Mammary epithelial cell (primary cell): ENCODE measurements at regions of chr15 and their contacts with region 1.

Region 1: GRCh38 chr15:33278816-33279612 is 31.8 kb upstream of the RYR3 start:
- DNase-seq: peak; percentile 96
- H3K4me3 ChIP-seq: no peak overlapping the region
- H3K27ac ChIP-seq: peak overlapping the region; percentile 96
- H3K4me1 ChIP-seq: peaks cover 22% of the 10 kb centered on the region
- H3K27me3 ChIP-seq: no peaks in the 10 kb centered on the region
- CTCF ChIP-seq: peak in 1 of 2 donors; percentile 37

Region 2: DNA sequence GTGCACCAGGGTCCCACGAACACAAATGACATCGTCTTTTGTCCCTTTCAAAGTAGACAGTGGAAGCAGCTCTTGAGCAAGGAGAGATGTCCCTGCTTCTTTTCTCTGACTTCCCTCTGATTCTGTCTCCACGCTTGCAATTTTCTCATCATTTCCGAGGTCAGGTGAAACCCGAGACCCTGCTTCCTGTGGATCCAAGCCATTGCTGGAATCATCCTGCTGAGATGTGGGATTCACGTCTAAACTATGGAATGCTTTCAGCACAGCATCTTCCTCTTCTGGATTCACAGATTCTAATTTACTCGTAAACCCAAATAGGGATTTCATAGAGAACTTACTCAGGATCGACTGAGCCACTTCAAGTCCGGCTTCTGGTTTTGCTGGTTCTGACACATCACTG is 211.6 kb before region 1 on chr15:
- CTCF ChIA-PET with region 1: no interaction called
- dilution Hi-C with region 1: no loop called
- in situ Hi-C with region 1: no loop called
- intact Hi-C with region 1: no loop called
- DNase-seq: no peak
- H3K4me3 ChIP-seq: peak overlapping the region in 2 of 3 experiments; percentile 8 to 23
- H3K27ac ChIP-seq: peak overlapping the region; percentile 84
- H3K4me1 ChIP-seq: peaks cover 33% of the 10 kb centered on the region
- H3K27me3 ChIP-seq: no peaks in the 10 kb centered on the region
- CTCF ChIP-seq: no peak

Region 3: DNA sequence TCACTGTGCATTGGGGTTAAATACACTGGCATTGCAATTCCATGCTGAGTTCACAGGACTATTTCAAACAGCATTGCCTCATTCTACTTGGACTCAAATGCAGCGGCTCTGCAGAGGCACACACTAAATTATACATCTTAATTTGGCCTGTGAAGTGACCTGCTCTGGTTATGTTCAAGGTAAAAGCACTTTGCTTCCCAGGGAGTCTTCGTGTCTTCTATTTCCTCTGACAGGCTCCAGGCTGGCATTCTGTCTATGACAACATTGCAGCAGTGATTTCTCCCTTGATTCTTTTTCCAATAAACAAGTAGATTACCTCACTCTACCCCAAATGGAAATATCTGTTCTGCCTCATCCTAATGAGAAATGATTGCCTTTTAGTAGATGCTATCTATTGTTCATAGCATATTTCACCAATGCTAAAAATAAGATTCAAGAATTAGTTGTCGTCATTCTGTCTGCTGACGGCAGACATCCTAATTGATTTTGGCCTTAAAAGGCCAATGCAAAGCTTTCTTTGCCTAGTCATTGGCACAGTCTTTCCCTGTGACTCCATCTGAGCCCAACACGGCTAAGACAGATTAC is 118.3 kb before region 1 on chr15:
- CTCF ChIA-PET with region 1: no interaction called
- dilution Hi-C with region 1: no loop called
- in situ Hi-C with region 1: no loop called
- intact Hi-C with region 1: no loop called
- DNase-seq: no peak
- H3K4me3 ChIP-seq: no peak overlapping the region
- H3K27ac ChIP-seq: no peak overlapping the region
- H3K4me1 ChIP-seq: peaks cover 6% of the 10 kb centered on the region
- H3K27me3 ChIP-seq: no peaks in the 10 kb centered on the region
- CTCF ChIP-seq: no peak

Region 4: GRCh38 chr15:33194704-33195670 is 84.0 kb before region 1 on chr15 and contains the start of gene FMN1:
- CTCF ChIA-PET with region 1: no interaction called
- dilution Hi-C with region 1: no loop called
- in situ Hi-C with region 1: no loop called
- intact Hi-C with region 1: no loop called
- DNase-seq: peak; percentile 91
- H3K4me3 ChIP-seq: peak within 1 kb of the TSS; percentile 35 to 55 (median 53)
- H3K27ac ChIP-seq: peak within 1 kb of the TSS; percentile 80
- H3K4me1 ChIP-seq: peaks cover 7% of the 10 kb centered on the region
- H3K27me3 ChIP-seq: no peaks in the 10 kb centered on the region
- CTCF ChIP-seq: no peak
- total RNA-seq, gene FMN1: 4.2 to 6.7 TPM

Region 5: DNA sequence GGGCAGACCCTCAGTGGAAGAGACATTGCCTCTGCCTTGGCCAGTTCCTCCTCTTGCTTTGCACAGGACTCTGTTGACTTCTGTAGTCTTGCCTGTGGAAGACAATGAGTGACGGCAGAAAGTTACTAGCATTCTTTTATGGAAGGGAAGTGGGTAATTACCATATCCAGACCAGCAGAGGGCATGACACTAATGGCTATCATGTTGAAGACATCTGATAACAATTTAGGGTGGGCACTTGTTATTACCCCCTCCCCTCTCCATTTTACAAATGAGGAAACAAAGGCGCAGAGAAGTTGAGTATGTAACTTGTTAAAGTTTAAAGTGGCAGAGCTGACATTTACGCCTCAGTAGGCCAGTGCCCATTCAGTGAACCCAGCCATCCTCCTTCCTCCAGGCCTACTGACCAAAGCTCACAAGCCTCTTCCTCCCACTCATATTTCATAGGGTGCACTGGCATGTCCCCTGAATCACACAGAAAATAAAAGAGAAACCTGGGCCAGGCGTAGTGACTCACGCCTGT is 36.3 kb before region 1 on chr15:
- CTCF ChIA-PET with region 1: no interaction called
- dilution Hi-C with region 1: loop called (anchors 5 kb)
- in situ Hi-C with region 1: no loop called
- intact Hi-C with region 1: loop called (anchors 1 kb)
- DNase-seq: peak; percentile 86
- H3K4me3 ChIP-seq: peak overlapping the region in 2 of 3 experiments; percentile 4 to 15
- H3K27ac ChIP-seq: peak overlapping the region; percentile 100
- H3K4me1 ChIP-seq: peaks cover 34% of the 10 kb centered on the region
- H3K27me3 ChIP-seq: no peaks in the 10 kb centered on the region
- CTCF ChIP-seq: peak; percentile 53 to 55

Region 6: DNA sequence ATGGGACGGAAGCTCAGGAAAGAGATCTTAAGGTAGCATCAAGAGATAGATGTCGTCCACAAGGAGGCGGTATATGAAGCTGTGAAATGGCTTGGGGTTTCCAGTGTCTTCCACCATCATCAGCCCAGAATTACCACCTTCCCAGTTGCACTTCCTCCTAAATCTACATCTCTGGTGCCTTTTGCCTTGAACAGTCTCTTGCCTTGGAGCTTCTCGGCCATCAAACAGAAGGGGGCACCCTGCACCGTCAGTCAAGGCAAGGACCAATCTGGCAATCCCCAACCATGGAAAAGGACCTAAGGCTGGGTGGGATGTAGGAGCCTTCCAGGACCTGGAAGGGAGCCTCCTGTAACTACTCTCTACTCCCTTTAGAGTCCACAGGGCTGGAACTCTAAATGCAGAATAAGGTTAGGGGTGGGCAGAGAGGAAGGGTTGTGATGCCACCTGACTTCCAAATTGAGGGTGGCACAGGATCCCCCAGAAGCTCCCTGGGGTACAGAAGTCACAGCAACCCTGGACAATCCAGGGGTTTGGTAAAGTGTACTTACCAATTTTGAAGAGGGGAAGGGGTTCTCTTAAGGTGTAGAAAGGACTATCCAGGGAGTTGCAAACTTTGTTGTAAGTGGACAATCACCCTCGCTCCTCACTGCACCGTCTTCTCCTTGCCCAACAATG is 30.7 kb after region 1 on chr15:
- CTCF ChIA-PET with region 1: no interaction called
- dilution Hi-C with region 1: loop called (anchors 5 kb)
- in situ Hi-C with region 1: no loop called
- intact Hi-C with region 1: no loop called
- DNase-seq: peak; percentile 17
- H3K4me3 ChIP-seq: no peak overlapping the region
- H3K27ac ChIP-seq: no peak overlapping the region
- H3K4me1 ChIP-seq: no peaks in the 10 kb centered on the region
- H3K27me3 ChIP-seq: peaks cover 16% of the 10 kb centered on the region
- CTCF ChIP-seq: no peak